ENCODE measurements at regions of chrX and their contacts with region 1.

Region 1: GRCh38 chrX:54529552-54530357 is at the start of gene GNL3L:
- DNase-seq: peak; percentile 92
- H3K4me3 Mint-ChIP-seq: peak within 1 kb of the TSS; percentile 94
- H3K27ac Mint-ChIP-seq: peak within 1 kb of the TSS; percentile 96
- H3K4me1 Mint-ChIP-seq: peaks cover 18% of the 10 kb centered on the region
- H3K27me3 Mint-ChIP-seq: no peaks in the 10 kb centered on the region
- total RNA-seq, gene GNL3L: 78.4 and 78.8 TPM in 2 replicates

Region 2: GRCh38 chrX:54182864-54183608 is 346.7 kb before region 1 on chrX and contains the start of gene FAM120C:
- intact Hi-C with region 1: loop called (anchors 2 kb)
- DNase-seq: peak; percentile 84
- H3K4me3 Mint-ChIP-seq: peak within 1 kb of the TSS; percentile 88
- H3K27ac Mint-ChIP-seq: peak within 1 kb of the TSS; percentile 92
- H3K4me1 Mint-ChIP-seq: peaks cover 37% of the 10 kb centered on the region
- H3K27me3 Mint-ChIP-seq: no peaks in the 10 kb centered on the region
- total RNA-seq, gene FAM120C: 10.8 and 11.4 TPM in 2 replicates

Region 3: DNA sequence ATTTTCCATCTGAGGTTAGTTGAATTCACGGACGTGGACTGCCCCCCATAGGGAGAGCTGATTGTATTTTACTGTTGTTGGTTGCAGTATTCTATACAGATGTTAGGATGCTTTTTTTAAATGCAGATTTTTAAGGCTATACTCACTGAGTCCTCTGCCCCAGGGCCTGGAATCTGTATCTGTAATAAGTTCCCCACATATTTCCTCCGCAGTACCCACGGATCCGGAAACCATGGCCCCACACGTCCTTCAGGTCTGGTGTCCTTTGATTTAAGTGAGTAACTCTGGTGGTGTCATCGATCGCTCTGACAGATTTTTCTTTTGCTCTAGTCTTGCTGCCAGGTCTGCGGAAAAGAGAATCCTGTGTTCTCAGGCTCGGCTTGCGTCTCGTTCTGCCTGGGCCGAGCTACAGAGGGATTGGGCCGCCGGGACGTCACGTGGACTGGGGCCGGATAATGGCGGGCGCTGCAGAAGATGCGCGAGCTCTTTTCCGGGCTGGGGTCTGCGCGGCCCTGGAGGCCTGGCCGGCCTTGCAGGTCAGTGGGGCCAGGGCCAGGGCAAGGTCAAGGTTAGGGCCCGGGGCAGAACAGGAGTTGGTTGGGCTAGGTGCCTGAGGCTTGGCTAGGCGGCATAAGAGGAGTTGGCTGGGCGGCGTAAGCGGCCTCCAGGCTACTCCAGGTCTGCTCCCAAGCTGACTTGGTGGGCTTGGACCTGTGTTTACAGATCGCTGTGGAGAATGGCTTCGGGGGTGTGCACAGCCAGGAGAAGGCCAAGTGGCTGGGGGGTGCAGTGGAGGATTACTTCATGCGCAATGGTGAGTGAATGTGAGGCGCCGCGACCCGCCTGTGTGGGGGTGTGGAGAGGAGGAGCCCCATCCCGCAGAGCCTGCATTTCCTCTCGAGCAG is 89.5 kb before region 1 on chrX and contains the start of gene TSR2:
- intact Hi-C with region 1: loop called (anchors 2 kb)
- DNase-seq: peak; percentile 93
- H3K4me3 Mint-ChIP-seq: peak within 1 kb of the TSS; percentile 96
- H3K27ac Mint-ChIP-seq: peak within 1 kb of the TSS; percentile 92
- H3K4me1 Mint-ChIP-seq: peaks cover 14% of the 10 kb centered on the region
- H3K27me3 Mint-ChIP-seq: no peaks in the 10 kb centered on the region
- total RNA-seq, gene TSR2: 40.8 and 43.7 TPM in 2 replicates

Region 4: GRCh38 chrX:54839282-54839681 is 309.5 kb after region 1 on chrX:
- intact Hi-C with region 1: no loop called
- DNase-seq: no peak
- H3K4me3 Mint-ChIP-seq: no peak overlapping the region
- H3K27ac Mint-ChIP-seq: no peak overlapping the region
- H3K4me1 Mint-ChIP-seq: no peaks in the 10 kb centered on the region
- H3K27me3 Mint-ChIP-seq: no peaks in the 10 kb centered on the region

Region 5: GRCh38 chrX:54999717-55000598 is 470.2 kb after region 1 on chrX and contains the start of gene APEX2:
- intact Hi-C with region 1: loop called (anchors 5 kb)
- DNase-seq: peak; percentile 96
- H3K4me3 Mint-ChIP-seq: peak within 1 kb of the TSS; percentile 97
- H3K27ac Mint-ChIP-seq: peak within 1 kb of the TSS; percentile 87
- H3K4me1 Mint-ChIP-seq: peaks cover 14% of the 10 kb centered on the region
- H3K27me3 Mint-ChIP-seq: no peaks in the 10 kb centered on the region
- total RNA-seq, gene APEX2: 32.2 and 36.1 TPM in 2 replicates

Measured in activated CD4-positive, alpha-beta T cell treated with anti-CD3 and anti-CD28 coated beads, Interleukin-2, amount 10 ng/mL, durations not matched to agents 24 days and 14 days (primary cell).